ENCODE measurements at regions of chr10 and their contacts with region 1.

Region 1: GRCh38 chr10:63521416-63522276 is 445 bp downstream of the REEP3 start:
- DNase-seq: peak; percentile 18 to 87 (median 40)
- ATAC-seq: peak; percentile 71
- H3K4me3 ChIP-seq: peak overlapping the region; percentile 87
- H3K4me3 Mint-ChIP-seq: peak overlapping the region; percentile 87
- H3K27ac ChIP-seq: peak overlapping the region; percentile 68 to 81
- H3K27ac Mint-ChIP-seq: peak overlapping the region; percentile 86
- H3K4me1 ChIP-seq: peaks cover 20% of the 10 kb centered on the region
- H3K4me1 Mint-ChIP-seq: peaks cover 71% of the 10 kb centered on the region
- H3K27me3 ChIP-seq: no peaks in the 10 kb centered on the region
- H3K27me3 Mint-ChIP-seq: no peaks in the 10 kb centered on the region
- CTCF ChIP-seq: no peak

Region 2: DNA sequence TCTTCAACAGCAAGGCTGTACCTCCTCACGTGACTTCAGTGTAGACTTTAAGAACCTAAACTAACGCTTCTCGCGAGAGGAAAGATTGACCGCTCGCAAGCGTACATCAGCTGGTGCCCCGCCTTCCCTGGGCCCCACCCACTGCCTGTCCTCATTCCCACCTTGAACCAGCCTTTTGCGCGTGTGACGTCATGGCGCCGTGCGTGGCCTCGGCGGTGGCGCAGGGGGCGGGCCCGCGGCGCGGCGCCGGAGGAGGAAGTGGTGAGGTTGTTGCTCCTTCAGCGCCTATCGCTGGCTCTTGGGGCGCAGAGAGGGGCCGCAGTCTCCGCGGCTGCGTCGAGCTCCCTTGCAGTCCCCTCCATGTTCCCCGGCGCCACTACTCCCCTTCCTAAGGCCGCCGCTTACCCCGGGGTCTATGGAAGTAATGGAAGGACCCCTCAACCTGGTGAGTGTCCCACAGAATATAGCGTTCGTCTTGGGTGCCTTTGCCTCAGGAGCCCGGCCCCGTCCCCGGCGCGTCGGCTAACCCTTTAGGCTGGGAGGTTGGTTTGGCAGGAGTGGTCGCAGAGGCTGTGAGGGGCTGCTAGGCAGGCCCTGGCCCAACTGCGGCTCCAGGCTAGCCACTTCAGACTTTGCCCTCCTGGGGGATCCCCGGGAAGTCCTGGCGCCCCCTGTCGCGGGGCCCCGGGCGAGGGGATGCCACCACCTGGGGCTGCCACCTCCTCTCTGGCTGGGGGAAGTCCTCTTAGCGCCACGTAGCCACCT is 388.4 kb before region 1 on chr10 and contains the start of gene NRBF2:
- CTCF ChIA-PET with region 1: no interaction called
- POLR2A ChIA-PET with region 1: interaction called, 13 read pairs
- intact Hi-C with region 1: no loop called
- DNase-seq: peak; percentile 91 to 99 (median 95)
- ATAC-seq: peak; percentile 90
- H3K4me3 ChIP-seq: peak within 1 kb of the TSS; percentile 89
- H3K4me3 Mint-ChIP-seq: peak within 1 kb of the TSS; percentile 94
- H3K27ac ChIP-seq: peak within 1 kb of the TSS; percentile 97 to 98
- H3K27ac Mint-ChIP-seq: peak within 1 kb of the TSS; percentile 88
- H3K4me1 ChIP-seq: peaks cover 44% of the 10 kb centered on the region
- H3K4me1 Mint-ChIP-seq: peaks cover 45% of the 10 kb centered on the region
- H3K27me3 ChIP-seq: no peaks in the 10 kb centered on the region
- H3K27me3 Mint-ChIP-seq: peaks cover 9% of the 10 kb centered on the region
- CTCF ChIP-seq: peak; percentile 22
- total RNA-seq, gene NRBF2: 25.3 to 25.6 TPM

Region 3: DNA sequence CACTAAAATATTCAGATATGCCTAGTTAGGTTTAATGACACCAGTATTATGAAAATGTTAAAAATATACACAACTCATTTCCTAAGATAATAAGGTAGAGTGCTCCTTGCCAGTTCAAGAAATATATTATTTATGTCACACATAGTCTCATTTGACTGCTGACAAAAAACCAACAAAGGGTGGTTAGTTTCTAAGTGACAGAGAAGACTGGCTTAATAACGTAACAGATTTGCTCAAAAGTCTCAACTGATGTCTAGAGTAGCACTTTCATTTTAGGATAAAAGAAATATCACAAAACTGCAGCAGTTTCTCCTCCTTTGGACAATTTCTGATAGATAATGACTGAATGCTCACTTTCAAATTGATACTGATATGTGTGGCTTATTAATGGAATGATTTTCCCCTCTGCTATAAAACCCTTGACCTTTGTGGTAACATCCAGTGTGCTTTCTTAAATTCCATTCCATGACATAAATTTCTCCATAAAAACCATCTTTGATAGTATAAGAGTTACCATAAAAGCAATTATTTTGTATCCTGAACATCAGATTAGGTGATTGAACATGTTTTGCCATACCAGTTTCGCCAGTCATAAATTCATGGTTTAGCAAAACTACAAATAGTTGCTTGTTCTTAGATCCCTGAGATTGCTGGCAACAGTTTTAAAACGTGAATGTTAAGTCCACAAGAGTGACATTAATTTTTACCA is 294.3 kb before region 1 on chr10:
- CTCF ChIA-PET with region 1: no interaction called
- POLR2A ChIA-PET with region 1: interaction called, 12 read pairs
- intact Hi-C with region 1: no loop called
- DNase-seq: peak in 3 of 14 experiments; percentile 42 to 51 (median 43)
- ATAC-seq: peak; percentile 19
- H3K4me3 ChIP-seq: no peak overlapping the region
- H3K4me3 Mint-ChIP-seq: peak overlapping the region; percentile 40
- H3K27ac ChIP-seq: peak overlapping the region in 1 of 2 donors; percentile 41
- H3K27ac Mint-ChIP-seq: peak overlapping the region; percentile 84
- H3K4me1 ChIP-seq: peaks cover 24% of the 10 kb centered on the region
- H3K4me1 Mint-ChIP-seq: peaks cover 81% of the 10 kb centered on the region
- H3K27me3 ChIP-seq: no peaks in the 10 kb centered on the region
- H3K27me3 Mint-ChIP-seq: no peaks in the 10 kb centered on the region
- CTCF ChIP-seq: no peak

Region 4: GRCh38 chr10:63465293-63466143 is 56.1 kb before region 1 on chr10 and contains the start of gene JMJD1C:
- CTCF ChIA-PET with region 1: no interaction called
- POLR2A ChIA-PET with region 1: interaction called, 34 read pairs
- intact Hi-C with region 1: loop called (anchors 2 to 5 kb)
- DNase-seq: peak; percentile 37 to 81 (median 52)
- ATAC-seq: peak; percentile 64
- H3K4me3 ChIP-seq: peak within 1 kb of the TSS; percentile 91
- H3K4me3 Mint-ChIP-seq: peak within 1 kb of the TSS; percentile 97
- H3K27ac ChIP-seq: peak within 1 kb of the TSS; percentile 49 to 57
- H3K27ac Mint-ChIP-seq: peak within 1 kb of the TSS; percentile 85
- H3K4me1 ChIP-seq: peaks cover 6% of the 10 kb centered on the region
- H3K4me1 Mint-ChIP-seq: peaks cover 67% of the 10 kb centered on the region
- H3K27me3 ChIP-seq: no peaks in the 10 kb centered on the region
- H3K27me3 Mint-ChIP-seq: no peaks in the 10 kb centered on the region
- CTCF ChIP-seq: no peak
- total RNA-seq, gene JMJD1C: 389 to 399 TPM